ENCODE measurements at regions of chr11 and their contacts with region 1.

Region 1: GRCh38 chr11:32385998-32386397 is 49.3 kb downstream of the WT1 start:
- DNase-seq: peak; percentile 46
- ATAC-seq: peak; percentile 96
- H3K4me3 Mint-ChIP-seq: no peak overlapping the region
- H3K27ac Mint-ChIP-seq: no peak overlapping the region
- H3K4me1 Mint-ChIP-seq: peaks cover 12% of the 10 kb centered on the region
- H3K27me3 Mint-ChIP-seq: no peaks in the 10 kb centered on the region; the same call in 1 of the 2 replicates
- CTCF ChIP-seq: 0 out of 2 replicates have a peak, but pooled peaks have one; percentile 15

Region 2: DNA sequence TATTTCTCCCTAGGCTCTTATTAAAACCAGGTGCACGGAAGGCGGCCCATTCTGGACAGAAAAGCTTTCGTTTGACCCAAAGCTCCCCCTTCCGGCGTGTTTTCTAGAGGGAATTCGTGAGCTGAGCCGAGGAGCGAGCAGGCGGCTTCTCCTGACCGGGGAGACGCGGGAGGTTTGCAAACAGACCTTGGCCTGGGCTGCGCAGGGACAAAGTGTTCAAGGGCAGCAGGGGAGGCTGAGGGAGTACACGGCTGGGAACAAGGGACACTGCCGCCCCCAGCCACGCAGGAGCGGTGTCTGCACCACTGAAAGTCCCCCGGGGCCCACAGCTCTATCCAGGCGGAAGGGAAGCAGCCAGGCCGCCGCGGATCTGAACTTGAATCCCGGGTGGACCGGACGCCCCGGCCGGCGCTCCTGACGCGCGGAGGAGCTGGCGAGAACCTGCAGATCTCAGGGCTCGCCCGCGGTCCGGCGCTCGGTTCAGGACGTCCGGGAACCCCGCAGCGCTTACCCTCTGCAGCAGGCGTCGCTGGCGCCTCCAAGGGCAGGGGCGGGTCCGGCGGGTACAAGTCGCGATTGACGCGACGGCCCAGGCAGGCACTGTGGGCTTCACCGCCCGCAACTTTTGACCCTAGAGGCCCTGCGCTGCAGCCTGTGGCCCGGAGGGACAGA is 52.5 kb before region 1 on chr11:
- CTCF ChIA-PET with region 1: interaction called, 15 read pairs
- POLR2A ChIA-PET with region 1: interaction called, 10 read pairs
- DNase-seq: peak; percentile 79
- ATAC-seq: peak; percentile 86
- H3K4me3 Mint-ChIP-seq: peak overlapping the region; percentile 70
- H3K27ac Mint-ChIP-seq: no peak overlapping the region
- H3K4me1 Mint-ChIP-seq: peaks cover 20% of the 10 kb centered on the region
- H3K27me3 Mint-ChIP-seq: peaks cover 52% of the 10 kb centered on the region
- CTCF ChIP-seq: no peak

Region 3: DNA sequence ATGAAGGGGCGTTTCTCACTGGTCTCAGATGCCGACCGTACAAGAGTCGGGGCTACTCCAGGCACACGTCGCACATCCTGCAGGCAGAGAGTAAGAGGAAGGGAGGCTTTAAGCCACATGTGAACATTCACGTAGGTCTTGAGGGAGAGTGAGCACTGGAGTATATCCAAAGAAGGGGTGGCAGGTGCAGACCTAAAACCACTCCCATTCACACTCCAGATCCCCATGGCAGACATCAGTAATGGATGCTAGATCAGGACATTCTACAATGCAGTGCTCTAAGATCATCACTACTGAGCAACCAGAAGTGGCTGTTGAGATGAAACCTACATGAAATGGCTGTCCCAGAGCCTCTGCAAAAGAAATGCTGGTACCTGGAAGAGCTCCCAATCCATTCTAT is 10.3 kb after region 1 on chr11:
- CTCF ChIA-PET with region 1: interaction called, 10 read pairs
- POLR2A ChIA-PET with region 1: interaction called, 4 read pairs
- DNase-seq: no peak
- ATAC-seq: no peak
- H3K4me3 Mint-ChIP-seq: no peak overlapping the region
- H3K27ac Mint-ChIP-seq: no peak overlapping the region
- H3K4me1 Mint-ChIP-seq: peaks cover 11% of the 10 kb centered on the region
- H3K27me3 Mint-ChIP-seq: no peaks in the 10 kb centered on the region; the same call in none of the 2 replicates
- CTCF ChIP-seq: no peak

Region 4: DNA sequence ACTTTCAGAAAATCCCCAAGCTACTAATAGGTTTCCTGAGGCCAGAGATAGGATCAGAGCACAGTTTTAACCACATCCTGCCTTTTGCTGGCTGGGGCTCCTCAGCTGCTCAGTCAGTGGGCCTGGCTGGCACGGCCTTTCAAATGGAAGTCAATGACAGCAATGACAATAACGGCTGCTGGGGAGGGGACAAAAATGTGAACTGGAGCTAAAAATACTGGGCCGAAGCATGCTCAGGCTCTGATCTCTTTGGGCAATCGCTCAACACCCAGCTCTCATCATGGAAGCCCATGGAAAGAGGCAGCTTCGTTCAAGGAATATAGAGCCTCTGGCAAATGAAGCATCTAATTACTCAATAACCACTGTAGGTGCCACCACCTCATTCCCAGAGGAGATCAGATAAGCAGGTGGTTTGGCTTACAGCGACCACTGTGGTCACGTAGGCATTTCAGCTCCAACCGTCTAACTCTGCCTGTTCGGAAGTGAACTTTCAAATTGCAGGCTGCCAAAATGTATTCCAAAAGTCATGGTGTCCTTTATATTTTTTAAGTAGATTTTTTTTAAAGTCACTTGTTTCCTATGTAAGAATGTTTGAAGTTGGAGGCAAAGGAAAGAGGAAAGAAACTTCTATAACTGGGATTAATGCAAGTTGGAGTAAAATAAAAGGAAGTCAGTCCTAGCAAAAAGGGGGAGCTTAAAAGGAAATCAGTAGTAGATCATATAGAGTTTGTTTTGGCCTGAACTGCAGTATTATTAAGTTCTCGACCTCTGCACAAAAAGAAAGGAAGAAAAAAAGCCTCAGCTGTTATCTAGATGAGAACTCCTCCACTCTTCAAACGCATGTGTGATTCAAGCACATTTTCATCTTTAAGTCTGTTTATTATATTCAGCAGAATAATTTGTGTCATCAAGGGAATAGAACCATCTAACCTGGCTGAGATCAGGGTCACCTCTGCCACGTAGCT is 35.2 kb after region 1 on chr11:
- CTCF ChIA-PET with region 1: interaction called, 11 read pairs
- POLR2A ChIA-PET with region 1: no interaction called
- DNase-seq: no peak
- ATAC-seq: no peak
- H3K4me3 Mint-ChIP-seq: no peak overlapping the region
- H3K27ac Mint-ChIP-seq: no peak overlapping the region
- H3K4me1 Mint-ChIP-seq: peaks cover 34% of the 10 kb centered on the region
- H3K27me3 Mint-ChIP-seq: peaks cover 47% of the 10 kb centered on the region
- CTCF ChIP-seq: no peak

Region 5: DNA sequence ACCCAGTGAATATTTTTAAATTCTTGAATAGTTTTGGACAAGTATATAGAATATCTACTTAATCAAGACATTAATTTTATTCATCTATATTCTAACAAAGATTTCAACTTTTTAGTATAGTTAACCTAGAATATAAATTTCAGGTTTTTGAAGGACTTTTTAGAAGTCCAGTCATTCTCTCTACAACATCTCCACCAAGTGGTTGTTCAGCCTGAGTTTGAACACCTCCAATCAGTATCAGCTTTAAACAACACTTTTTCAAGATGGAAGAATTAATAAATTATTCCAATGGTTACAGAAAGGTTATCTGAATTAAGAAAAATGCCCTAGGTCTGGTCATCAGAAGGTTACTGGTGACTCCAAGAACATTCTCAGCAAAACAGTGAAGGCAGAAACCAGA is 229.4 kb after region 1 on chr11:
- CTCF ChIA-PET with region 1: interaction called, 11 read pairs
- POLR2A ChIA-PET with region 1: interaction called, 3 read pairs
- DNase-seq: no peak
- ATAC-seq: no peak
- H3K4me3 Mint-ChIP-seq: no peak overlapping the region
- H3K27ac Mint-ChIP-seq: no peak overlapping the region
- H3K4me1 Mint-ChIP-seq: peaks cover 4% of the 10 kb centered on the region
- H3K27me3 Mint-ChIP-seq: no peaks in the 10 kb centered on the region
- CTCF ChIP-seq: no peak

Measured in WTC11 (cell line).